ENCODE measurements at regions of chrX and their contacts with region 1.

Region 1: GRCh38 chrX:85111347-85111746 is 107.7 kb downstream of the APOOL start:
- DNase-seq: no peak
- H3K4me3 ChIP-seq: no peak overlapping the region
- H3K27ac ChIP-seq: no peak overlapping the region
- H3K4me1 ChIP-seq: peaks cover 0 to 4% (median 1%) of the 10 kb centered on the region in 4 donors
- H3K27me3 ChIP-seq: no peaks in the 10 kb centered on the region
- CTCF ChIP-seq: peak; percentile 42 to 58 (median 52)
- EP300 ChIP-seq: no peak
- POLR2A ChIP-seq: no peak

Region 2: GRCh38 chrX:84415140-84415539 is 696.2 kb before region 1 on chrX:
- in situ Hi-C with region 1: no loop called
- intact Hi-C with region 1: no loop called
- DNase-seq: no peak
- H3K4me3 ChIP-seq: no peak overlapping the region
- H3K27ac ChIP-seq: no peak overlapping the region
- H3K4me1 ChIP-seq: no peaks in the 10 kb centered on the region
- H3K27me3 ChIP-seq: no peaks in the 10 kb centered on the region
- CTCF ChIP-seq: no peak
- EP300 ChIP-seq: no peak
- POLR2A ChIP-seq: no peak

Region 3: DNA sequence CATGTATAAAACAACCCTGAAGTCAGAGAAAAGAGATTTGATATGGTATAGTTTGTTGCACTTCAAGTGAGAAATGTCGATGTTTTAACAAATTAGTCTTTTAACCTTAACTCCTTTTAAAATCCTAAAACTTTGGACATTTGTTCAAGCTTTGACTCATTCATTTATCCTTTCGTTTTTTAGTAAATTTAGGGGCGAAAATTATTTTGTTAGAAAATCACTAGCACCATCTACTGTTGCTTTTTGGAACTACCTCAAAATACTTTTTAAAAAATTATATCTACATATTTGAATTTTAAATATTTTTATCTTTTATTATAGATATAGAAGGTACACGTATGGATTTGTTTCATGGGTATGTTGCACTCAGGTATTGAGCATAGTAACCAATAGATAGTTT is 433.3 kb after region 1 on chrX:
- in situ Hi-C with region 1: loop called in 3 of 4 experiments (anchors 10 to 25 kb)
- intact Hi-C with region 1: no loop called
- DNase-seq: no peak
- H3K4me3 ChIP-seq: no peak overlapping the region
- H3K27ac ChIP-seq: no peak overlapping the region
- H3K4me1 ChIP-seq: no peaks in the 10 kb centered on the region
- H3K27me3 ChIP-seq: no peaks in the 10 kb centered on the region
- CTCF ChIP-seq: peak; percentile 32 to 54 (median 34)
- EP300 ChIP-seq: no peak
- POLR2A ChIP-seq: no peak

Region 4: DNA sequence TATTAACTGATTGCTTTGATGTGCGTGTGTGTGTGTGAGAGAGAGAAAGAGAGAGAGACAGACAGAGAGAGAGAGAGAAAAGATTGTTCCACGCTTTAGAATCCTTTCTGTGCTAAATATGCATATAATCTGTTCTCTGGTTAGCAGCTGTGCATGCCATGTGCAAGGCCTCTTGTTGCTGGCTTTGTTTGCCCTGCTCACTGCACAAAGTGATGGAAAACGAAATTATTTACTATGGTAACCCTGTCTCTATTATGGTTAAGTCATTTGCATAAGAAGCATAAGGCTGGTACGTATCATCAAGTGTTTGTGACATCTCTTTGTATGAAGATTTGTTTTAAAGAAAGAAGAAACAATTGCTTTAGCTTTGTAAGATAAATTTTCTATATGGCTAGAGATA is 458.3 kb after region 1 on chrX:
- in situ Hi-C with region 1: loop called in 1 of 4 experiments (anchors 25 kb)
- intact Hi-C with region 1: no loop called
- DNase-seq: no peak
- H3K4me3 ChIP-seq: no peak overlapping the region
- H3K27ac ChIP-seq: no peak overlapping the region
- H3K4me1 ChIP-seq: no peaks in the 10 kb centered on the region
- H3K27me3 ChIP-seq: no peaks in the 10 kb centered on the region
- CTCF ChIP-seq: no peak
- EP300 ChIP-seq: no peak
- POLR2A ChIP-seq: no peak